OCI-LY7 (cell line): ENCODE measurements at regions of chr9 and their contacts with region 1.

Region 1: DNA sequence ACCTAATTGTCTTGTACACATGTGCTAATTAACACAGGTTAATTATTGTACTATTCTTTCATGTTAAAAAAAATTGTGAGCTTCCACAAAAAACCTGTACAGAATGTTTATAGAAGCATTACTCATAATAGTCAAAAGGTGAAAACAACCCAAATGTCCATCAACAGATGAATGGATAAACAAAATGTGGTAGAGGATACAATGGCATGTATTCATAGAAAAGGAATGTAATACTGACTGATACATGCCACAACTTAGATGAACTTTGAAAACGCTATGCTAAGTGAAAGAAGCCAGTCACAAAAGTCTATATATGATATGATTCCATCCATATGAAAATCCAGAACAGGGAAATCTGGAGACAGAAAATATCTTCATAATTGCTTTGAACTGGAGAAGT is 25.6 kb downstream of the RRAGA start:
- DNase-seq: no peak
- H3K4me3 ChIP-seq: no peak overlapping the region
- H3K27ac ChIP-seq: no peak overlapping the region
- H3K4me1 ChIP-seq: no peaks in the 10 kb centered on the region
- CTCF ChIP-seq: no peak

Region 2: GRCh38 chr9:18896531-18897179 is 178.2 kb before region 1 on chr9:
- CTCF ChIA-PET with region 1: no interaction called
- POLR2A ChIA-PET with region 1: no interaction called
- intact Hi-C with region 1: no loop called
- DNase-seq: no peak
- H3K4me3 ChIP-seq: no peak overlapping the region
- H3K27ac ChIP-seq: no peak overlapping the region
- H3K4me1 ChIP-seq: no peaks in the 10 kb centered on the region
- CTCF ChIP-seq: no peak

Region 3: DNA sequence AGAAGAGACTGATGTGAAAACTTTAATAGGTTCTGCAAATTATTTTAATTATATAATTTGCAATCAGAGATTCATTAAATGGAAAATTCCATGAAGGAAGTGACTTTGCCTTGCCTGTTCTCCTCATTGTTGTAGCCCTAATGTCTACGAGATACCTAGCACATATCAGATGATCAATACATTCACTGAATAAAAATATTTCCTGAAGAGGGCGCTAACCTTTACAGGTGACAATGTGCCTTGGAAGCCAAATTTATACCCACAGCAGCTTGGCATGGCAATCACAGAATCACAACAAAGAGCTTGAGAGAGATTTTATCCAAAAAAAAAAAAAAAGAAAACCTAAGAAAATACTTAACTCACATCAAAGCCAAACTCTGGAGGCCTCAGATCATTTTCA is 10.5 kb after region 1 on chr9:
- CTCF ChIA-PET with region 1: no interaction called
- POLR2A ChIA-PET with region 1: interaction called, 3 read pairs
- intact Hi-C with region 1: loop called (anchors 2 kb)
- DNase-seq: peak; percentile 27
- H3K4me3 ChIP-seq: no peak overlapping the region
- H3K27ac ChIP-seq: no peak overlapping the region
- H3K4me1 ChIP-seq: no peaks in the 10 kb centered on the region
- CTCF ChIP-seq: peak; percentile 78

Region 4: DNA sequence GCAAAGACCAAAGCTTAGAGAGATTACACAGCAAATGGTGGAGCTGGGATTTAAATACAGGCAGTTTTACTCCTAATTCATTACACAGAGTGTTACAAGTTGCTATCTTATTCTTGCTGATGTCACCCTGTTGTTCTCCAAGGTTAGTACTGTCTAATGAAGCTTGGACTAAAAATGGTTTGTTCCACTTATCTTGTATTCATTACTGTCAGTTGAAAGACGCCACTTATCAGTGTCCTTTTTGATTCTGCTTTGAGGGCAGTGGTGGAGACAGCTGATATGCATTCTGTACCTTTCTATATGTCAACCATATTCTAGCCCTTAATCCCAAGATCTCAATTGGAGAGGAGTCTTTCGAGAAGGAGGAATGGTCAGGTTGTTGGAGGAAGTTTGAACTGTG is 141.6 kb after region 1 on chr9:
- CTCF ChIA-PET with region 1: no interaction called
- POLR2A ChIA-PET with region 1: no interaction called
- intact Hi-C with region 1: no loop called
- DNase-seq: no peak
- H3K4me3 ChIP-seq: no peak overlapping the region
- H3K27ac ChIP-seq: no peak overlapping the region
- H3K4me1 ChIP-seq: no peaks in the 10 kb centered on the region
- CTCF ChIP-seq: no peak